GM12878 (cell line): ENCODE measurements at regions of chr15 and their contacts with region 1.

Region 1: GRCh38 chr15:89206908-89207331 is 14.5 kb downstream of the RLBP1 start:
- DNase-seq: no peak
- ATAC-seq: peak; percentile 98
- H3K4me3 ChIP-seq: no peak overlapping the region
- H3K27ac ChIP-seq: no peak overlapping the region
- H3K4me1 ChIP-seq: no peaks in the 10 kb centered on the region
- H3K27me3 ChIP-seq: no peaks in the 10 kb centered on the region
- CTCF ChIP-seq: peak; percentile 96 to 99 (median 99); a peak in 5 of 6 replicates
- EP300 ChIP-seq: no peak
- POLR2A ChIP-seq: no peak
- RAD21 ChIP-seq: peak; percentile 87

Region 2: DNA sequence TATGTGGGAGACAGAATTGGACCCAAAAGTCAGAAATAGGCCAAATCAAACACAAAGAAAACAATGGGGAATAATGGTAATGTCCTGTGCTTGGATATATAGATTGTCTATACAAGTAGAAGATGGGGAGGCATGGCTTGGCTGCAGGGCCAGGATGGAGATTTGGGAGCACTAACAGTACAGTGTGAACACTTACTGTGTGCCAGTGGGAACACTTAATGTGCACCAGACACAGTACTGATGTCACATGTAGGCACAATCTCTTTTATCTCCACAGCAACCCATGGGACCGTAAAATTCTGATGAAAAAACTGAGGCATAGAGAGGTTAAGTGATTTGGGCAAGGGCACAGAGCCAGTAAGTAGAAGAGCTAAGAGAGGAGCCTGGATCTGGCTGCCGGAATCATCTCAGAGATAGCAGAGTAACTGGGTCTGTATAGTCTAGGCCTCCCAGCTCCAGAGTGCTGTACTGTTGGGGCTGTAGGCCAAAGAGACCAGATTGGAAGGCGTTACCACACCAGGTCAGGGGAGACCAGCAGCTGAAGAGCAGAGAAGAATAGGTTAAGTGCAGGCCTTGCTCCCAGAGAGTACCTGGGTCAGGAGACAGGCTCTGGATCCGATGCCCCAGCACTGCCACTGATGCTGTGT is 48.9 kb before region 1 on chr15:
- CTCF ChIA-PET with region 1: no interaction called
- POLR2A ChIA-PET with region 1: no interaction called
- RAD21 ChIA-PET with region 1: no interaction called
- SMC1A ChIA-PET with region 1: no interaction called
- in situ Hi-C with region 1: no loop called
- intact Hi-C with region 1: no loop called
- DNase-seq: no peak
- ATAC-seq: no peak
- H3K4me3 ChIP-seq: no peak overlapping the region
- H3K27ac ChIP-seq: no peak overlapping the region
- H3K4me1 ChIP-seq: no peaks in the 10 kb centered on the region
- H3K27me3 ChIP-seq: no peaks in the 10 kb centered on the region
- CTCF ChIP-seq: no peak
- EP300 ChIP-seq: no peak
- POLR2A ChIP-seq: no peak
- RAD21 ChIP-seq: no peak

Region 3: DNA sequence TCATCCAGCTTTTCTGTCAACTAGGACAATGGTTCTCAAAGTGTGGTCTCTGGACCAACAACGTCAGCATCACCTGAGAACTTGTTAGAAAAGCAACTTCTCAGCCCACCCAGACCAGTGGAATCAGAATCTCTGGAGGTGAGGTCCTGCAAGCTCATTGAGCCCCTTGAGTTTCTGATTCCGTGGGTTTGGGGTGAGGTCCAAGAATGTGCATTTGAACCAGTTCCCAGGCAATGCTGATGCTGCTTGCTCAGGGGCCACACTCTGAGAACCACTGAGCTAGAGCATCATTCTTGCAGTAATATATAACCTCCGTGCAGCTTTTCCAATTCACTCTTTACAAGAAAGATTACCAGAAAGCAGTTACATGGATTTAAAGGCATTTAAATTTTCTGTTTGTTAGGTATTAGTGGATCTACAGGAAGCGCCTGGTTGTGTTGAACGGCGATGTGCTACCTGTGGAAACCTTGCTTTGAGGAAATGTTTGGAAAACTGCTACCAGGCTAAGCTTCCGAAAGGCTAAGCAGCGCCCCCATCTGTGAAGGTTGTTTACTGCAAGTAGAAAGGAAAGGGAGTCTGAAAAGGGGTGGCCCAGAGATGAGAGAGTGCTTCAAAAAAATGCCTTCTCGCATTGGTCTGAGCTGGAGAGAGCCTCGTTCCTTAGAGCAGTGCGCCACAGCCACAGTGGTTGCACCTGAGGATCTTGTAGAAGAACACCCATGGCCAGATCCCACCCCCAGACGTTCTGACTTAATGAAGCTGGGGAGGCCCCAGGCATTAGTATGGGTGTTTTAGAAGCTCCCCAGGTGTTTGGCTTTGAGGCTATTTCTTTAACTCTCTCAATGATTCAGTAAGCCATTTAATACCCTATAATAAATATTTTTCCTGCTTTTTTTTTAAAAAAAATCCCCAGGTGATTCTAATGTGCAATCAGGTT is 35.5 kb before region 1 on chr15:
- CTCF ChIA-PET with region 1: interaction called, 10 read pairs
- POLR2A ChIA-PET with region 1: no interaction called
- RAD21 ChIA-PET with region 1: interaction called, 5 read pairs
- SMC1A ChIA-PET with region 1: no interaction called
- in situ Hi-C with region 1: no loop called
- intact Hi-C with region 1: no loop called
- DNase-seq: no peak
- ATAC-seq: peak; percentile 22; the same call in 1 of the 3 replicates
- H3K4me3 ChIP-seq: no peak overlapping the region
- H3K27ac ChIP-seq: no peak overlapping the region
- H3K4me1 ChIP-seq: peaks cover 18% of the 10 kb centered on the region
- H3K27me3 ChIP-seq: no peaks in the 10 kb centered on the region
- CTCF ChIP-seq: peak; percentile 54 to 68 (median 64)
- EP300 ChIP-seq: no peak
- POLR2A ChIP-seq: no peak
- RAD21 ChIP-seq: peak; percentile 53

Region 4: GRCh38 chr15:89221543-89221942 is 14.6 kb after region 1 on chr15 and contains the start of gene RLBP1:
- CTCF ChIA-PET with region 1: interaction called, 15 read pairs
- POLR2A ChIA-PET with region 1: no interaction called
- RAD21 ChIA-PET with region 1: interaction called, 4 read pairs
- SMC1A ChIA-PET with region 1: no interaction called
- in situ Hi-C with region 1: no loop called
- intact Hi-C with region 1: no loop called
- DNase-seq: no peak
- ATAC-seq: peak; percentile 30
- H3K4me3 ChIP-seq: no peak within 1 kb of the TSS
- H3K27ac ChIP-seq: no peak within 1 kb of the TSS
- H3K4me1 ChIP-seq: no peaks in the 10 kb centered on the region
- H3K27me3 ChIP-seq: no peaks in the 10 kb centered on the region
- CTCF ChIP-seq: no peak
- EP300 ChIP-seq: no peak
- POLR2A ChIP-seq: no peak
- RAD21 ChIP-seq: no peak
- polyA plus RNA-seq, gene RLBP1: not detected

Region 5: GRCh38 chr15:89243691-89244471 is 37.0 kb after region 1 on chr15 and contains the start of gene FANCI:
- CTCF ChIA-PET with region 1: interaction called, 42 read pairs
- POLR2A ChIA-PET with region 1: no interaction called
- RAD21 ChIA-PET with region 1: interaction called, 32 read pairs
- SMC1A ChIA-PET with region 1: interaction called, 17 read pairs
- in situ Hi-C with region 1: no loop called
- intact Hi-C with region 1: loop called (anchors 2 kb)
- DNase-seq: peak; percentile 70
- ATAC-seq: peak; percentile 93
- H3K4me3 ChIP-seq: peak within 1 kb of the TSS; percentile 87
- H3K27ac ChIP-seq: peak within 1 kb of the TSS; percentile 92
- H3K4me1 ChIP-seq: peaks cover 10% of the 10 kb centered on the region; the same call in 1 of the 2 replicates
- H3K27me3 ChIP-seq: no peaks in the 10 kb centered on the region
- CTCF ChIP-seq: peak; percentile 37 to 62 (median 40); a peak in 4 of 6 replicates
- EP300 ChIP-seq: no peak
- POLR2A ChIP-seq: peak; percentile 80
- RAD21 ChIP-seq: peak; percentile 22; the same call in 1 of the 2 replicates
- polyA plus RNA-seq, gene FANCI: 38.1 to 51.0 TPM

Region 6: GRCh38 chr15:89291934-89292438 is 85.1 kb after region 1 on chr15:
- CTCF ChIA-PET with region 1: interaction called, 10 read pairs
- POLR2A ChIA-PET with region 1: interaction called, 4 read pairs
- RAD21 ChIA-PET with region 1: interaction called, 6 read pairs
- SMC1A ChIA-PET with region 1: no interaction called
- in situ Hi-C with region 1: no loop called
- intact Hi-C with region 1: no loop called
- DNase-seq: no peak
- ATAC-seq: no peak
- H3K4me3 ChIP-seq: no peak overlapping the region
- H3K27ac ChIP-seq: no peak overlapping the region
- H3K4me1 ChIP-seq: no peaks in the 10 kb centered on the region
- H3K27me3 ChIP-seq: no peaks in the 10 kb centered on the region
- CTCF ChIP-seq: no peak
- EP300 ChIP-seq: no peak
- POLR2A ChIP-seq: no peak
- RAD21 ChIP-seq: no peak

Region 7: DNA sequence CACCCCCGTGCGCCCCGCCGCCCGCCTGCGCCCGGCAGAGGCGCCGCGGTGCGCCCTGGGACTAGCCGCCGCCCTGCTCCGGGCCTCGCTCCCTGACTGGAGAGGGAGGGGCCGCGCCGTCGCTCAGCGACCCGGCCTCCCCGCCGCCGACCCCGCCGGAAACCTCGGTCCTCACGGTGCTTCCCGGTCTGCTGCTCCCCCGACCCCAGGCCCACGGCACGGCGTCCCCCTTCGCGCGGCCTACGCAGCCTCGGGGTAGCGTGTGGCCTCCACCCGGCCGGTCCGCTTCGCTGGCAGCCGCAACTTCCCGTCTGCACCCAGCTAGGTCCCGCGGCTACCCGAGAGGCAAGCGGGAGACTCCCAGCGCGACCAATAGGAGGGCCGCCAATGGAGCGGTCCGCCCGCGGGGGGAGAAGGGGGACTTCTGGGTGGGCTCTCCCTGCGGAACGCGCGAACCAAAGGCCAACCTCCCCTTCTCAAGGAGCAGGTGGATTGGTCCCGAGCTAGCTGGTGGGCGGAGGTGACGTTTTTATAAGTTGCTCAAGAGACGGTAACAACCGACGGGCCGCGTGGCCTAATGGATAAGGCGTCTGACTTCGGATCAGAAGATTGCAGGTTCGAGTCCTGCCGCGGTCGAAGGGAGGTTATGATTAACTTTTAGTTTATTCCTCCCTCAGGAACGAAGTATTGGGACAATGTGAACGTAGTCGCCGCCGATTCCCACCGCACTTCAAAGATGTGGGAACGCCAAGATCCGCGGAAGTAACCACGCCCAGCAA is 127.8 kb after region 1 on chr15 and contains the start of gene POLG:
- CTCF ChIA-PET with region 1: interaction called, 9 read pairs
- POLR2A ChIA-PET with region 1: no interaction called
- RAD21 ChIA-PET with region 1: interaction called, 3 read pairs
- SMC1A ChIA-PET with region 1: interaction called, 3 read pairs
- in situ Hi-C with region 1: no loop called
- intact Hi-C with region 1: loop called (anchors 5 kb)
- DNase-seq: peak; percentile 98
- ATAC-seq: peak; percentile 94
- H3K4me3 ChIP-seq: peak within 1 kb of the TSS; percentile 76
- H3K27ac ChIP-seq: peak within 1 kb of the TSS; percentile 90
- H3K4me1 ChIP-seq: peaks cover 30% of the 10 kb centered on the region
- H3K27me3 ChIP-seq: no peaks in the 10 kb centered on the region
- CTCF ChIP-seq: no peak
- EP300 ChIP-seq: peak; percentile 54 to 57; a peak in 3 of 4 replicates
- POLR2A ChIP-seq: peak; percentile 100
- RAD21 ChIP-seq: no peak
- polyA plus RNA-seq, gene POLG: 14.8 to 21.6 TPM

Region 8: DNA sequence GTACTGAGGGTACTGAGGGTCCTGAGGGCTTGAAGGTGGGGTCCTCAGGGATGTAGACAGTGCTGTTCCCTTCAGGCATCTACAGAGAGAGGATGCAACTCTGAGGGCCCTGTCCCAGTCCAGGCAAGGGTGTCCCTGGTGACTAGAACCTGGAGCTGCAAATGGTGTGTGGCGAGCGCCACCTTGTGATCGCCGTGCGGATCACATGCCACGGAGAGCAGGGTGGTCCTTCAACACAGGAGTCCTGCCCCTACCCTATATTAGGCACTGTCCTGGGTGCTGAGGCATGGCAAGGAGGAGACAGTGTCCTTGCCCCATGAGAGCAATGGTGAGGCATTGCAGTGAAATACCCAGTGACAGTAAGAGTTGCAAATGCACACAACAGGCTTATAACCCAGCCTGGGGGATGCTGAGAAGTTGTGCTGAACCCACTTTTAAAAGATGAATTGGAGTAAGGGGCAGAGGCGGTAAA is 265.9 kb after region 1 on chr15:
- CTCF ChIA-PET with region 1: interaction called, 5 read pairs
- POLR2A ChIA-PET with region 1: no interaction called
- RAD21 ChIA-PET with region 1: interaction called, 6 read pairs
- SMC1A ChIA-PET with region 1: no interaction called
- in situ Hi-C with region 1: no loop called
- intact Hi-C with region 1: loop called (anchors 5 kb)
- DNase-seq: no peak
- ATAC-seq: peak; percentile 99
- H3K4me3 ChIP-seq: no peak overlapping the region
- H3K27ac ChIP-seq: no peak overlapping the region
- H3K4me1 ChIP-seq: no peaks in the 10 kb centered on the region
- H3K27me3 ChIP-seq: peaks cover 0 to 6% of the 10 kb centered on the region in 2 experiments; a peak in 2 of 4 replicates
- CTCF ChIP-seq: peak; percentile 84 to 92 (median 91)
- EP300 ChIP-seq: no peak
- POLR2A ChIP-seq: no peak
- RAD21 ChIP-seq: peak; percentile 91